Activated CD4-positive, alpha-beta memory T cell treated with anti-CD3 and anti-CD28 coated beads, Interleukin-2, amount 10 ng/mL, durations not matched to agents 7 days and 5 days (primary cell): ENCODE measurements at regions of chr11 and their contacts with region 1.

Region 1: GRCh38 chr11:64924102-64924851 is at the start of gene PPP2R5B:
- DNase-seq: peak; percentile 94
- H3K4me3 Mint-ChIP-seq: peak within 1 kb of the TSS; percentile 88
- H3K27ac Mint-ChIP-seq: peak within 1 kb of the TSS; percentile 96
- H3K4me1 Mint-ChIP-seq: peaks cover 21% of the 10 kb centered on the region
- H3K27me3 Mint-ChIP-seq: no peaks in the 10 kb centered on the region
- total RNA-seq, gene PPP2R5B: 19.8 to 21.1 TPM

Region 2: DNA sequence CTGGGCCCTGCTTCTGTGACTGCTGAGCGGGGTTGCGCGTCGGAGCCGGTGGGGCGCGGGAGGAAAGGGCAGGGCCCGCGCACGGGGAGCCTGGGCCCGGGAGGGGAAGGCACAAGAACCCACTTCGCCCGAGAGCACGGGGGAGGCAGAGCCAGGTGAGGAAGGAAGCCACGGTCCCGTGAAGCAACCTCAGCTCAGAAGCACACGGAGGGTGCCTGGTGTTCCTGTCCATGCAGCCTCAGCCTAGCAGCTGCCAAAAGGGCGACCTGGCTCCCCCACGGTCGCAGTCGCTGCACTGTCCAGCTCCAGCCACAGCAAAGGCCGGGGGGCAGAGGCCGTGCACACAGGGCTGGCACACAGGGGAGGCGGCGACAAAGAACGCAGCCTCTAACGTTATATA is 70.6 kb before region 1 on chr11:
- CTCF ChIA-PET with region 1: no interaction called
- POLR2A ChIA-PET with region 1: no interaction called
- DNase-seq: no peak
- H3K4me3 Mint-ChIP-seq: peak overlapping the region; percentile 17
- H3K27ac Mint-ChIP-seq: peak overlapping the region; percentile 86
- H3K4me1 Mint-ChIP-seq: peaks cover 90% of the 10 kb centered on the region
- H3K27me3 Mint-ChIP-seq: no peaks in the 10 kb centered on the region

Region 3: GRCh38 chr11:64878494-64879243 is 45.6 kb before region 1 on chr11 and contains the start of gene EHD1:
- CTCF ChIA-PET with region 1: no interaction called
- POLR2A ChIA-PET with region 1: interaction called, 14 read pairs
- DNase-seq: peak; percentile 100
- H3K4me3 Mint-ChIP-seq: peak within 1 kb of the TSS; percentile 94
- H3K27ac Mint-ChIP-seq: peak within 1 kb of the TSS; percentile 91
- H3K4me1 Mint-ChIP-seq: peaks cover 55% of the 10 kb centered on the region
- H3K27me3 Mint-ChIP-seq: no peaks in the 10 kb centered on the region
- total RNA-seq, gene EHD1: 138 to 146 TPM